ENCODE measurements at regions of chr22 and their contacts with region 1.

Region 1: DNA sequence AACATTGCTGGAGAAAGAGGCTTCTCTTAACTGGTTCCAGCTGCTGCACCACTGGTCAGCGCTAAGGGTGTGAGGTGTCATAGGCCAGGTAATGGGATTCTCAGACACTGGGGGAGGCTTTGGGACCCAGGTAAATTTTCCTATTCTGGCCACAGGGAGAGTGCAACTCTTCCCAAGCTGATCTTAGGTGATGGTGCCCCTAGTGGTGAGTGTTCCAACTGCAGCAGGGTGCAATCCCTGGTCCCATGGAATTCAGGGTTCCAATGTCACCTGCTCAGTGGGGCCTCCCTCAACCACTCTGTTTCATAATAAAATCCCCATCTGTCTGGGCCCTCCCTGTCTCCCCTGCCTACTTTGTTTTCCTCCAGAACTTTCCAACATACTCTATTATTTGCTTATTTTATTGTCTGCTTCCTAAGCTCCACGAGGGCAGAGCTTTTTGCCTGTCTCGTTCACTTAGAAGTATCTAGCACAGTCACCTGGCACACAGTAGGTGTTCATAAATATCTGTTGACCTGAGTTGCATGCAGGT is 2.9 kb upstream of the SGSM1 start:
- DNase-seq: peak; percentile 54
- H3K4me3 Mint-ChIP-seq: no peak overlapping the region
- H3K27ac Mint-ChIP-seq: no peak overlapping the region
- H3K4me1 Mint-ChIP-seq: no peaks in the 10 kb centered on the region
- H3K27me3 Mint-ChIP-seq: peaks cover 28% of the 10 kb centered on the region
- CTCF ChIP-seq: peak; percentile 81

Region 2: GRCh38 chr22:24789516-24789915 is 13.6 kb before region 1 on chr22:
- CTCF ChIA-PET with region 1: interaction called, 11 read pairs
- POLR2A ChIA-PET with region 1: interaction called, 3 read pairs
- intact Hi-C with region 1: no loop called
- DNase-seq: no peak
- H3K4me3 Mint-ChIP-seq: no peak overlapping the region
- H3K27ac Mint-ChIP-seq: no peak overlapping the region
- H3K4me1 Mint-ChIP-seq: no peaks in the 10 kb centered on the region
- H3K27me3 Mint-ChIP-seq: peaks cover 50% of the 10 kb centered on the region
- CTCF ChIP-seq: no peak

Region 3: GRCh38 chr22:24812950-24813775 is 10.1 kb after region 1 on chr22:
- CTCF ChIA-PET with region 1: interaction called, 19 read pairs
- POLR2A ChIA-PET with region 1: no interaction called
- intact Hi-C with region 1: no loop called
- DNase-seq: no peak
- H3K4me3 Mint-ChIP-seq: no peak overlapping the region
- H3K27ac Mint-ChIP-seq: no peak overlapping the region
- H3K4me1 Mint-ChIP-seq: no peaks in the 10 kb centered on the region
- H3K27me3 Mint-ChIP-seq: peaks cover 81% of the 10 kb centered on the region
- CTCF ChIP-seq: no peak